GM10248 (cell line): ENCODE measurements at regions of chr11 and their contacts with region 1.

Region 1: DNA sequence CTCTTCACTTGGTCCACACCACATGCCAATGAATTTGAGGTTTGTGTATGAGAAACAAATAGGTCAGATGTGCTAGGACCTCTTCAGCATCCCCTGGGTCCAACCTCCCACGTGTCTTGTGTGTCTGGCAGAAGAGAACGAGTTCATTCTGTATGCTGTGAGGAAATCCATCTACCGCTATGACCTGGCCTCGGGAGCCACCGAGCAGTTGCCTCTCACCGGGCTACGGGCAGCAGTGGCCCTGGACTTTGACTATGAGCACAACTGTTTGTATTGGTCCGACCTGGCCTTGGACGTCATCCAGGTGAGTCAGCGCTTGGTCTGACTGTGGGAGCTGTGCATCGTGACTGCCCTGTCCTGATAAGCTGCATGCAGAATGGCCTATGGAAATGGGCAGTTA is 101.0 kb upstream of the SORL1-AS1 start:
- DNase-seq: no peak
- CTCF ChIP-seq: no peak

Region 2: DNA sequence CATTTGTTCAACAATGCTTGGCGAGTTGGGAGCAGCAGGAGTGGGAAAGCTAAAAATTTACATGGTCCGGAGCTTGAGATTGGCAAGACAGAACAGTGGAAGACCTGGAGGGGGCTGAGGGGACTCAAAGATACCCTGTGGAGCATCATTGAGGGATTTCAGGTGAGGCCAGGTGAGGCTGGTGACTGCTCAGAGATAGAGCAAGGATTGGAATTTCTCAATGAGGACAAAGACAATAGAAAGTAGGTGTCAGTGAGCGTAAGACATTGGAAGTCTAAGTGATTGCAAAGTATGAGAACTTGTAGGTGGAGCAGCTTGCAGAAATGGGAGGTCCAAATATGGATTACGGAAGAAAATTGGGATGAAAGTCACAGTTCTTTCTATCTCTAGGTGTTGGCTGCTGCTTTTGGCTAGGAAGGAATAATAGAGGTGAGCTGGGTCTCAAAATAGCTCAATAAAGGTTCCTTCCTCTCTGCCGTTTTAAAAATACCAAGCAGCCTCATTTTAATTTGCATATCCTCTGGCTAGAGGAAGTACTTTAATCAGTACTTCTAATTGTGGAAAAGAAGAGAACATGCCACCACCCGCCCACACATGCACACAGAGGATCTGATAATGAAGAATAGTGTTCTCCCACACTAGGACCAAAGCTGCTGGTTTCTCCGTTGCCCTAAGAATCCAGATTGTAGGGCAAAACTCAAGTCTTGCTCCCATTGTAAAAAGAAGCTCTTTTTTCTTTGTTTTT is 59.3 kb before region 1 on chr11:
- CTCF ChIA-PET with region 1: no interaction called
- POLR2A ChIA-PET with region 1: no interaction called
- DNase-seq: peak; percentile 34
- CTCF ChIP-seq: no peak

Region 3: DNA sequence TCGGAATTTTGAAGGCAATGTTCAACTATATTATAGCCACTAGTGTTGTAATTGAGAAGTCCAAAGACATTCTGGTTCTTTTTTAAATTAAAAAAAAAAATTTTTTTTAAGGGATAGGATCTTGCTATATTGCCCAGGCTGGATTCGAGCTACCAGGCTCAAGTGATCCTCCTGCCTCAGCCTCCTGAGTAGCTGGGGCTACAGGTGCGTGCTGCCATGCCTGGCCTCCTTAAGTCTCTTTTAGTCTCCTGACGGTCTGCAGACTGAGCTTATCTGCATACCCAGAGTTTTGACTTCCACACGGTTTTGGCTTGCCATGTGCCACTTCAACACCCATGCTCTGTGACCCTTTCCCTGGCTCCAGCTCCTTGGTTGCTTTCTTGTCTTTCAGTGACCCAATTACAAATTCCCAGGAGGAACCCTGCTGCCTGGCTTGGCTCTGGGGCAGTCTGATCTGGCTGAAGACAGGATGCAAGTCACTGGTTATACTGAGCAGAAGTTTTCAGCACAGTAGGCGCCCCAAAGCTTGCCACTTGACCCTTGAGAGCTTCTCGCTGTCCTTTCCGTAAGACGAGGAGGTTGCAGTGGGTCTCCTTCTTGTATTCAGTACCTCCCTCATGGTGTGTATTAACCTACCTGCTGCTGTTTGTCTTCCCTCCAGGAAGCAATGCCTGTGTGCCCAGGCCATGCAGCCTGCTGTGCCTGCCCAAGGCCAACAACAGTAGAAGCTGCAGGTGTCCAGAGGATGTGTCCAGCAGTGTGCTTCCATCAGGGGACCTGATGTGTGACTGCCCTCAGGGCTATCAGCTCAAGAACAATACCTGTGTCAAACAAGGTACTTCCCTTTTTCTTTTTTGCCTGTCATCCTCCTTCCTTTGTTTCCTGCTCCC is 12.7 kb after region 1 on chr11:
- CTCF ChIA-PET with region 1: interaction called, 11 read pairs
- POLR2A ChIA-PET with region 1: no interaction called
- DNase-seq: no peak
- CTCF ChIP-seq: no peak

Region 4: GRCh38 chr11:122069707-122070360 is 516.0 kb after region 1 on chr11:
- CTCF ChIA-PET with region 1: no interaction called
- POLR2A ChIA-PET with region 1: no interaction called
- DNase-seq: peak; percentile 10
- CTCF ChIP-seq: no peak